Pancreas (tissue), 10 donors: ENCODE measurements at regions of chr6 and their contacts with region 1.

Region 1: GRCh38 chr6:7137335-7138045 is 29.7 kb downstream of the RREB1 start:
- DNase-seq: peak in 1 of 6 donors; percentile 42
- ATAC-seq: no peak
- H3K4me3 ChIP-seq: no peak overlapping the region
- H3K27ac ChIP-seq: peak overlapping the region; percentile 33 to 98 (median 72)
- H3K4me1 ChIP-seq: peaks cover 44 to 63% (median 51%) of the 10 kb centered on the region in 3 donors
- H3K27me3 ChIP-seq: no peaks in the 10 kb centered on the region
- CTCF ChIP-seq: no peak

Region 2: DNA sequence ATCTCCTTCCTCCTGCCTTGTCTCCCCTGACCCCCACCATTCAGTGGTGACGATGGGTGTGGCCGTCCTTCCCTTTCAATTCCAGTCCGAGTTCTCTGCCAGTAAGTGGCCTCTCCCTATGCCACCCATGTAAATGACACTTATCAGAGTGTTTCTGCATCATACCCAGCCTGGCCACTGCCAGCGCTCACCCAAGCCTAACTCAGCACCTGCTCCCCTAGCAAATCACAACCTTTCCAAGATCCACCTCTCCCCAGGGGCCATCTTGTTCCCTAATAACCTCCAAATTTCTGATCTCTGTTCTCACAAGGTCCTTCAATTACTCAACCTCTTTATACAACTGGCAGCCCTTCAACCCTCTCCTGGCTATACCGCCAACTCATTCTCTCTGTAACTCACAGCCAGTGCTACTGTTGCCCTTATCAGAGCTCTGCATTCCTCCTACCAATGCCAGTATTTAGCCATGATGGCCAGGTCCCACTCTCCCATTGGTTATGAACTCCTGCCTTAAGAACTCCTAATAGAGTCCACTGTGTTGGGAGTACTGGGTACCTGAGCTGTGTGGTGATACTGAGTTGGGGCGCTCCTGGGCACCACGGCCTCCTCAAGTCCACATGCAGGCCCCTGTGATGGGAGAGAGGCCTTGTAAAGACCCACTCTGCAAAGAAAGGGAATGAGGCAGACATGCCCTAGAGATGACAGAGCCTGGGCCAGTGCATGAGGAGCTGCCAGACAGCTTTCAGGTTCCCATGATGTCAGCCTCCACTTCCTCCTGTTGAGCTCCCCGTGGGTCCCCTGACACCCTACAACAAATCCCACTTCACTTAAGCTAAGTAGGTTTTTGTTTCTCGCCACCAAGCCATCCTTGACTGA is 217.1 kb before region 1 on chr6:
- intact Hi-C with region 1: loop called in 1 of 3 experiments (anchors 5 kb)
- DNase-seq: peak in 3 of 6 donors; percentile 49 to 69 (median 59)
- ATAC-seq: peak; percentile 69 to 84 (median 78)
- H3K4me3 ChIP-seq: no peak overlapping the region
- H3K27ac ChIP-seq: peak overlapping the region; percentile 48 to 78 (median 64)
- H3K4me1 ChIP-seq: peaks cover 6 to 21% (median 13%) of the 10 kb centered on the region in 3 donors
- H3K27me3 ChIP-seq: no peaks in the 10 kb centered on the region
- CTCF ChIP-seq: no peak